Naive thymus-derived CD4-positive, alpha-beta T cell (primary cell): ENCODE measurements at regions of chr3 and their contacts with region 1.

Region 1: GRCh38 chr3:122679085-122679881 is 1.4 kb upstream of the PARP14 start:
- DNase-seq: peak; percentile 49 to 84 (median 79)
- ATAC-seq: peak; percentile 82
- H3K4me3 ChIP-seq: peak overlapping the region; percentile 87
- H3K4me3 Mint-ChIP-seq: peak overlapping the region; percentile 87 to 99 (median 94)
- H3K27ac ChIP-seq: peak overlapping the region; percentile 98
- H3K27ac Mint-ChIP-seq: peak overlapping the region; percentile 93 to 100 (median 98)
- H3K4me1 ChIP-seq: peaks cover 27 to 33% of the 10 kb centered on the region in 2 donors
- H3K4me1 Mint-ChIP-seq: peaks cover 40 to 57% (median 54%) of the 10 kb centered on the region in 7 donors
- H3K27me3 ChIP-seq: no peaks in the 10 kb centered on the region
- H3K27me3 Mint-ChIP-seq: no peaks in the 10 kb centered on the region

Region 2: DNA sequence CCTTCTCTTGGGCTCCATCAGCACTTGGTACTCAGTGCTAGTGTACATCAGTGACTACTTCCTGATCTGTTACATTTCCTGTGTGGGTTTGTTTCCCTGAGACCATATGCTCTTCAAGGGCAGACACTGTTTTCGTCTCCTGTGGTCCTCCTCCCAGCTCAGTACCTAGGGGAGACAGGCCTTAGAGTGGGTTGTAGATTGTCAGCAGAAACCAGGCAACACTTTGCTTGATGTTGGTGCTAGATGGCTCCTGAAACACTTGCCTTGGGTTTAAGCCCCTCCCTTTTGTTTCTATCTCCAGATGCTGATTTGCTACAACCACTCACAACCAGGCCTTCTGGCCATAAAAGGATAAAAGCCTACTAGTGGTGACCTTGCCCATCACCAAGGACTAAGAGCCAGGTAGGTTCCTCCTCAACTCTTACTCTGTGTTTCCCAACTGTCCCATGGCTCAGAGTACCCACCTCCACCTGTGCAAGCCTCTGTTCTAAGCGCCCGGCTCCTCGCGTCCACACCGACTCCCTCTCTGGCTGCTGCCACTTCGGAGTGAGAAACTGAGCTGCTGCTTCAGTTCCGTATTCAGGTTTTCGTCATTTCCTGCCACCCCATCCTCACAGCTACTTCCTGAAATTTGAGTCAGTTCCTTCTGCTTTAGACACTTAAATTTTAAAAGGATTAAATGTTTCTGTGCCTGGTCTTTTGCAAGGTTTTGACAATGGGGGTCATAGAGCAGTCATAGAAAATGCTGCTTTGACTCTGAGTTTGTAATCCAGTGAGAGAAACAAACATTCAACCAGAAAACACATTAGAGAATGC is 1018.7 kb before region 1 on chr3 and contains the start of gene HCLS1:
- CTCF ChIA-PET with region 1: no interaction called
- POLR2A ChIA-PET with region 1: no interaction called
- intact Hi-C with region 1: loop called in 1 of 2 experiments (anchors 2 kb)
- DNase-seq: peak; percentile 60 to 87 (median 79)
- ATAC-seq: peak; percentile 87
- H3K4me3 ChIP-seq: peak within 1 kb of the TSS; percentile 90
- H3K4me3 Mint-ChIP-seq: peak within 1 kb of the TSS; percentile 82 to 99 (median 95)
- H3K27ac ChIP-seq: peak within 1 kb of the TSS; percentile 90
- H3K27ac Mint-ChIP-seq: peak within 1 kb of the TSS; percentile 96 to 100 (median 99)
- H3K4me1 ChIP-seq: peaks cover 34 to 41% of the 10 kb centered on the region in 2 donors
- H3K4me1 Mint-ChIP-seq: peaks cover 41 to 68% (median 57%) of the 10 kb centered on the region in 7 donors
- H3K27me3 ChIP-seq: no peaks in the 10 kb centered on the region
- H3K27me3 Mint-ChIP-seq: no peaks in the 10 kb centered on the region
- total RNA-seq, gene HCLS1: 275 to 357 (median 311) TPM

Region 3: DNA sequence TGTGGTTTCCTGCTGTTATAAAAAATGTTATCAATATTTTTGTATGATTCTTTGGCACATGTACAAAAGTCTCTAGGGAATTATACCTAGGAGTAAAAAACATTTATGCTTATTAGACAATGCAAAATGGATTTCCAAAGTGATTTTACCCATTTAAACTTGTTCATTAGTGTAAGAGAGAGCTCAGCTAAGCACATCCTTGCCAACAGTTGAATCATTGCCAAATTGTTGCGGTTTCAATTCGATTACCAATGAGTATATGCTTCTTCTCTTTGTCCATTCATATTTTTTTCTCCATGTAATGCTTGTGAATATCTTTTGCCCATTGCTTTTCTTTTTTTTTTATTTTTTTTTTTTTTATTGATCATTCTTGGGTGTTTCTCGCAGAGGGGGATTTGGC is 478.6 kb before region 1 on chr3:
- CTCF ChIA-PET with region 1: no interaction called
- POLR2A ChIA-PET with region 1: no interaction called
- intact Hi-C with region 1: no loop called
- DNase-seq: no peak
- ATAC-seq: no peak
- H3K4me3 ChIP-seq: no peak overlapping the region
- H3K4me3 Mint-ChIP-seq: no peak overlapping the region
- H3K27ac ChIP-seq: no peak overlapping the region
- H3K27ac Mint-ChIP-seq: no peak overlapping the region
- H3K4me1 ChIP-seq: no peaks in the 10 kb centered on the region
- H3K4me1 Mint-ChIP-seq: no peaks in the 10 kb centered on the region
- H3K27me3 ChIP-seq: no peaks in the 10 kb centered on the region
- H3K27me3 Mint-ChIP-seq: peaks cover 7 to 25% (median 9%) of the 10 kb centered on the region in 5 donors

Region 4: DNA sequence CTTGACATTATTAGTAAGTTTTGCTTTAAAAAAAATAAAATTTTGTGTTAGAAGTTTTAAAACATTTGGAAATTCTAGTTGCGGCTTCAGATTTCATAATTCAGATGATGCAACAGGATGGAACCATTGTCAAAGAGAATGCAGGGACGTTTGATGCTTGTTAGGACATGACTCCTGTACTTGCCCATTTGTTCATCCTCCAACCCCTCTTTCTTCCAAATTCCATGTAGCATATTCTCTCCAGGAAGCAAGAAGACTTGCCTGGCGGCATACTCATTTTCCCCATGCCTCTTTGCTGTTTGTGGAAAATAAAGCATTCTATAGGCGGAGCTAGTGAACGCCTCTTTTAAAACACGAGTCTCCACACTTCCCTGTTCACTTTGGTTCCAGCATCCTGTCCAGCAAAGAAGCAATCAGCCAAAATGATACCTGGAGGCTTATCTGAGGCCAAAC is 354.4 kb before region 1 on chr3 and contains the start of gene CSTA:
- CTCF ChIA-PET with region 1: no interaction called
- POLR2A ChIA-PET with region 1: no interaction called
- intact Hi-C with region 1: no loop called
- DNase-seq: no peak
- ATAC-seq: no peak
- H3K4me3 ChIP-seq: no peak within 1 kb of the TSS
- H3K4me3 Mint-ChIP-seq: no peak within 1 kb of the TSS
- H3K27ac ChIP-seq: no peak within 1 kb of the TSS
- H3K27ac Mint-ChIP-seq: no peak within 1 kb of the TSS
- H3K4me1 ChIP-seq: peaks cover 0 to 13% of the 10 kb centered on the region in 2 donors
- H3K4me1 Mint-ChIP-seq: peaks cover 16 to 31% (median 21%) of the 10 kb centered on the region in 7 donors
- H3K27me3 ChIP-seq: peaks cover 0 to under 1% of the 10 kb centered on the region in 2 donors
- H3K27me3 Mint-ChIP-seq: peaks cover 0 to 8% (median 0%) of the 10 kb centered on the region in 5 donors
- total RNA-seq, gene CSTA: 0.70 to 44.4 (median 3.1) TPM in 4 of 5 experiments, not detected in the other

Region 5: GRCh38 chr3:122392868-122393844 is 286.1 kb before region 1 on chr3:
- CTCF ChIA-PET with region 1: interaction called, 19 read pairs
- POLR2A ChIA-PET with region 1: interaction called, 8 read pairs
- intact Hi-C with region 1: loop called (anchors 1 kb)
- DNase-seq: peak in 7 of 9 donors; percentile 27 to 56 (median 46)
- ATAC-seq: peak; percentile 75
- H3K4me3 ChIP-seq: no peak overlapping the region
- H3K4me3 Mint-ChIP-seq: no peak overlapping the region
- H3K27ac ChIP-seq: no peak overlapping the region
- H3K27ac Mint-ChIP-seq: no peak overlapping the region
- H3K4me1 ChIP-seq: no peaks in the 10 kb centered on the region
- H3K4me1 Mint-ChIP-seq: peaks cover 7 to 36% (median 18%) of the 10 kb centered on the region in 7 donors
- H3K27me3 ChIP-seq: no peaks in the 10 kb centered on the region
- H3K27me3 Mint-ChIP-seq: no peaks in the 10 kb centered on the region

Region 6: GRCh38 chr3:122557356-122557755 is 121.9 kb before region 1 on chr3:
- CTCF ChIA-PET with region 1: interaction called, 154 read pairs
- POLR2A ChIA-PET with region 1: interaction called, 84 read pairs
- intact Hi-C with region 1: loop called (anchors 1 kb)
- DNase-seq: no peak
- ATAC-seq: no peak
- H3K4me3 ChIP-seq: no peak overlapping the region
- H3K4me3 Mint-ChIP-seq: no peak overlapping the region
- H3K27ac ChIP-seq: no peak overlapping the region
- H3K27ac Mint-ChIP-seq: no peak overlapping the region
- H3K4me1 ChIP-seq: peaks cover 8% of the 10 kb centered on the region in 2 donors
- H3K4me1 Mint-ChIP-seq: peaks cover 35 to 68% (median 38%) of the 10 kb centered on the region in 7 donors
- H3K27me3 ChIP-seq: no peaks in the 10 kb centered on the region
- H3K27me3 Mint-ChIP-seq: no peaks in the 10 kb centered on the region

Region 7: DNA sequence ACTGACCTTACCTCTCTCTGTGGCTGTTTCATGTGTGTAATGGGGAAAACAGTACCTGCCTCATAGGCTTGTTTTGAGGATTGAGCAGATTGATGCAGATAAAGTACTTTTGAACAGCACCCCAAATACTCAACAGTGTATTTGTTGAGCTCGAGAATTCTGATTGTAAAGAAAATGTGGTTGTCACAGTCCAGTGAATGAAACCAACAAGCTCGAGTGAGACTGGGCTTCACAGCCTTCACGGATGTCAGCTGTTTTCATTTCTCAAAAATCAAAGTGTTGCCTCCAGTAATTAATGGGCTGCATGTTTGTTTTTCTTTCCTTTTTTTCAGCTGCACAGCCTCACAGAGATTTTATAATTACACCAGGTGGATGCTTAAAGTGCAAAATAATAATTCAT is 58.2 kb before region 1 on chr3:
- CTCF ChIA-PET with region 1: interaction called, 11 read pairs
- POLR2A ChIA-PET with region 1: no interaction called
- intact Hi-C with region 1: no loop called
- DNase-seq: no peak
- ATAC-seq: no peak
- H3K4me3 ChIP-seq: no peak overlapping the region
- H3K4me3 Mint-ChIP-seq: no peak overlapping the region
- H3K27ac ChIP-seq: no peak overlapping the region
- H3K27ac Mint-ChIP-seq: peak overlapping the region in 1 of 9 donors; percentile 21
- H3K4me1 ChIP-seq: no peaks in the 10 kb centered on the region
- H3K4me1 Mint-ChIP-seq: peaks cover 0 to 5% (median 0%) of the 10 kb centered on the region in 7 donors
- H3K27me3 ChIP-seq: no peaks in the 10 kb centered on the region
- H3K27me3 Mint-ChIP-seq: no peaks in the 10 kb centered on the region

Region 8: DNA sequence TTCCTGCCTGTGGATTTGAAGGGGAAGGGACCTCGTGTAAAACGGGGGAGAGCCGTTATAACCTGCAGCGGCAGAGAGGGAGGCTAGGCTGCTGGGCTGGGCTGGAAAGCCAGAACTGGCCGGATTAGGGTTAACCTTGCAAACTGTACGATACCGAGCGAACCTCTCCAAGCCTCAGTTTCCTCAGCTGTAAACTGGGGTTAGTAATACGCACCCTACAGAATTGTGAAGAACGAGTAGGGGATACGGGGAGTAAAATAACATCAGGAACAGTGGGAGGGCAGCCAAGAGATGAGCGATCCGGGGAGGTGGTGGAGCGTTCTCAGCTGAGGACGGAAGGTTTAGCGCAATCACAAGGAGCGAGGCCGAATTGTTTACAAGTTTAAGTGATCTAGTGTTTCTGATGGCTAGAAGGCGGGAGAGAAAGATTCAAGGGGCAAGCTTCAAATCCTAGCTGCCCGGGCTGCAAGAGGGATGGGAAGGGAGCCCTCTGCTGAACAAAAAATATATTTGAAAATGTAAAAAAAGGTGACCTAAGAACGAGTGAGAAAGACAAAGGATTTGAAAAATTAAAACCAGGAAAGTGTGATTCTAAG is 349.0 kb after region 1 on chr3:
- CTCF ChIA-PET with region 1: no interaction called
- POLR2A ChIA-PET with region 1: no interaction called
- intact Hi-C with region 1: loop called in 1 of 2 experiments (anchors 1 kb)
- DNase-seq: peak in 5 of 9 donors; percentile 19 to 36 (median 28)
- ATAC-seq: peak; percentile 40
- H3K4me3 ChIP-seq: peak overlapping the region; percentile 62
- H3K4me3 Mint-ChIP-seq: peak overlapping the region; percentile 76 to 93 (median 80)
- H3K27ac ChIP-seq: no peak overlapping the region
- H3K27ac Mint-ChIP-seq: no peak overlapping the region
- H3K4me1 ChIP-seq: peaks cover 2 to 10% of the 10 kb centered on the region in 2 donors
- H3K4me1 Mint-ChIP-seq: peaks cover 12 to 20% (median 17%) of the 10 kb centered on the region in 7 donors
- H3K27me3 ChIP-seq: peaks cover 7 to 13% of the 10 kb centered on the region in 2 donors
- H3K27me3 Mint-ChIP-seq: peaks cover 33 to 62% (median 35%) of the 10 kb centered on the region in 5 donors